ENCODE measurements at regions of chr6 and their contacts with region 1.

Region 1: DNA sequence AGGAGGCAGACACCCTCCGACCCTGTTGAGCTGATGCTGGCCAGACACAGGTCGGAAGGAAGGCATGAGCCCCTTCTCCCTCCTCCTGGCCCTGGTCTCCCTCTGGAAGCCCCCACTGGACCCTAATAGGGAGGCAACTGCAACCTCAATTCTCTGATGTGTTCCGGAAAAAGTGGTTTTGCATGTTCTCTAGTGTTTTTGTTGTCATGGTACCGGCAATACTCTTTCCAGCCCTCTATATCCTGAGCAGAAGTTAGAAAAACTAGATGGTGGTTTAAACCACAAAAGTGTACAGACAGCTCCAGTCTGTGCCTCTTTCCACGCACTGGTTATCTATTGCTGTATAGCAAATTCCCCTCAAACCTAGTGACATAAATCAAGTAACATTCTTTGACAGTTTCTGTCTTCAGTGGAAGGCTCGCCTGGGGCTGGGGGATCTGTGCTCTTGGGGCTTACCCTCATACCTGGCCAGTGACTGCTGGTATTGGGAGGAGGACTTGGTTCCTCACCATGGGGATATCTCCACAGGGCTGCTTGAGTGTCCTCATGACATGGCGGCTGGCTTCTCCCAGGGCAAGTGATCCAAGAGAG is 37.0 kb downstream of the SYTL3 start:
- DNase-seq: no peak
- ATAC-seq: peak; percentile 50
- H3K4me3 ChIP-seq: no peak overlapping the region
- H3K27ac ChIP-seq: peak overlapping the region; percentile 67
- H3K4me1 ChIP-seq: peaks cover 16 to 24% of the 10 kb centered on the region in 2 experiments
- H3K27me3 ChIP-seq: no peaks in the 10 kb centered on the region
- CTCF ChIP-seq: no peak
- POLR2A ChIP-seq: no peak
- RAD21 ChIP-seq: no peak

Region 2: GRCh38 chr6:158213925-158214674 is 472.8 kb before region 1 on chr6:
- CTCF ChIA-PET with region 1: interaction called, 56 read pairs
- POLR2A ChIA-PET with region 1: no interaction called
- RAD21 ChIA-PET with region 1: interaction called, 5 to 9 read pairs
- intact Hi-C with region 1: loop called (anchors 2 kb)
- DNase-seq: peak; percentile 75
- ATAC-seq: peak; percentile 100
- H3K4me3 ChIP-seq: no peak overlapping the region
- H3K27ac ChIP-seq: no peak overlapping the region
- H3K4me1 ChIP-seq: peaks cover 0 to 19% of the 10 kb centered on the region in 2 experiments; a peak in 3 of 4 replicates
- H3K27me3 ChIP-seq: no peaks in the 10 kb centered on the region
- CTCF ChIP-seq: peak; percentile 72 to 81 (median 79)
- POLR2A ChIP-seq: no peak
- RAD21 ChIP-seq: peak; percentile 94

Region 3: DNA sequence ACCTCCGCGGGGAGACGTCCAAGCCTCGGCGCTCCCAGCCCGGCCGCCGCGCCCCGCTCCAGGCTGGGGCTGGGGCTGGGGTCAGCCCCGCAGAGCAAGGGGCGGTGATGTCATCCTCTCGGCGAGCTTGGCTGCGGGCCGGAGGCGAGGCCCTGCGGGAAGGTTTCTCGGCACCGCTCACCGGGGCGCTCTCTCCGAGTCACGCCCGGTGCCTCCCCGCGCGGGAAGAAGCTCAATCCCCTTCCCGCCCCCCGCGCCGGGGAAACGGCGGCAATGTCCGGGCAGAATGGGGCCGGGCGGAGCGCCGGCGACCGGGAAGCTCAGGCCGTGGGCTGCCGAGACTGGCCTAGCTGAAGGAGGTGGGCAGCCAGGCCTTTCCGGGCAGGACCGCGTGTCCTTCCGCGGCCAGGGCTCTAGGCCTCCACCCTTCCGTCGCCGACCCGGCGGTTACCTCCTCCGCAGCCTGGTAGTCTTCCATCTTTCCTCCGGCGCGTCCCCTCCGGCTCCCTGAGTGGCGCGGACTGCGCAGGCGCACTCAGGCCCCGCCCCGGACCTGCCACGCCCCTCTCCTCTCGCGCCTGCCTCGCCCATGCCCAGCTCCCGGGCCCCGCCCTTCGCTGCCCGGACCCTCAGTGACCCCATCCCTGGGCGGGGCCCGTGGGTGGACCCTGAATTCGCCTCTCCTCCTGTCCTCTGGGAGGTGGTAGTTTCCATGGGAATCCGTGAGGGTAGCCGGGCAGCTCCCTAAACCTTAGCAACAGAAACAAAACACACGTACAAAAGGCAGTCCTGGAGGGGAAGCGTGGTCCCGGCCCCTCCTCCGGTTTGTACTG is 42.4 kb before region 1 on chr6 and contains the start of gene DYNLT1:
- CTCF ChIA-PET with region 1: interaction called, 12 read pairs
- POLR2A ChIA-PET with region 1: interaction called, 5 read pairs
- RAD21 ChIA-PET with region 1: interaction called in 1 of 2 experiments, 4 read pairs
- intact Hi-C with region 1: no loop called
- DNase-seq: peak; percentile 91
- ATAC-seq: peak; percentile 83
- H3K4me3 ChIP-seq: peak within 1 kb of the TSS; percentile 89 to 91
- H3K27ac ChIP-seq: peak within 1 kb of the TSS; percentile 97
- H3K4me1 ChIP-seq: peaks cover 60 to 73% of the 10 kb centered on the region in 2 experiments
- H3K27me3 ChIP-seq: no peaks in the 10 kb centered on the region
- CTCF ChIP-seq: no peak
- POLR2A ChIP-seq: peak; percentile 75
- RAD21 ChIP-seq: no peak
- total RNA-seq, gene DYNLT1: 239 TPM

Region 4: DNA sequence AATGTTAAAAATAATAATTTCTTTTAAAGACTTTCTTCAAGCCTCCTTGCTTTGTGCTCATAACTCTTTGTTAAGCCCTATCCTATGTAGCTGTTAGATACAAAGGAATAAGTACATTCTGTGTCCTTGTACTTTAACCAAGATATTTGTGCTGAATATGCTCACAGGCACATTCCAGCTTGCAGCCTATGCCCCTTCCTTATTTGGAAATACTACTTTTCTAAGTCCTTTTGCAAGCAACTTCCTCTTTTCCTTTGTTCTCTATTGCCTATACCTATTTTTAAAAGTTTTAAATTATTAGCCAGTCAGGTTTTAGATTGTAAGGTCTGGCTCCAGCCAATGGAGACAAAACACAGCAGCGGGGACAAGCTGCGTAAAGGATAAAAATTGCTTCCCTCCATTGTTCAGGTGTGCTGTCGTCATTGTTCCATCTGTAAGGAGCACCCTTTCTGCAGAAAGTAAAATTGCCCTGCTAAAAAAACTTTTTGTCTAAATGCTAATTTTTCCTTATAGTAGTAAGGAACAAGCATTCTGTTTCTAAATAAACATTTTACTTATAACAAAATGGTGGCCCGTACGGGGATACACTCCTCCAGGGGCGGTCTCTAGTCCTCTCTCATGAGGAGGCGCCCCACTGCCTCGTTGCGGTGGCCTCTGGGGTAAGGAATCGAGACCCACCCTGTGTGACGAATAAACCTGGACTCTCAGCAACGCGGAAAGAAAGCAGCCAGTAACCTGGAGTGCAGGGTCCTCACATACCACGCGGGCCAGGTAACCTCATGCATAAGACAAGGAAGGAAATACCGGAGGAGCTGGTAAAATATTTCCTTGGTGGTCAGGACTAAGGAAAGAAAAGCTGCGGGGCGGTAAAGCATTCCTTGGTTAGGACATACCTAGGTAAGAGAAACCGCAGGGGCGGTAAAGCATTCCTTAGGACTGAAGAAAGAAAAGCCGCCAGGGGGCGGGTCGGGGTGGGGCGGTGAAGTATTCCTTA is 43.3 kb after region 1 on chr6:
- CTCF ChIA-PET with region 1: interaction called, 3 read pairs
- POLR2A ChIA-PET with region 1: no interaction called
- RAD21 ChIA-PET with region 1: no interaction called
- intact Hi-C with region 1: loop called (anchors 1 kb)
- DNase-seq: peak; percentile 100
- ATAC-seq: peak; percentile 85
- H3K4me3 ChIP-seq: peak overlapping the region; percentile 7 to 12; a peak in 2 of 4 replicates
- H3K27ac ChIP-seq: peak overlapping the region; percentile 97
- H3K4me1 ChIP-seq: peaks cover 44 to 79% of the 10 kb centered on the region in 2 experiments
- H3K27me3 ChIP-seq: no peaks in the 10 kb centered on the region
- CTCF ChIP-seq: no peak
- POLR2A ChIP-seq: peak; percentile 37
- RAD21 ChIP-seq: no peak

Region 5: GRCh38 chr6:158808941-158809678 is 122.2 kb after region 1 on chr6:
- CTCF ChIA-PET with region 1: interaction called, 15 read pairs
- POLR2A ChIA-PET with region 1: interaction called, 17 read pairs
- RAD21 ChIA-PET with region 1: no interaction called
- intact Hi-C with region 1: loop called (anchors 1 kb)
- DNase-seq: no peak
- ATAC-seq: no peak
- H3K4me3 ChIP-seq: peak overlapping the region in 1 of 2 experiments; percentile 1; a peak in 1 of 4 replicates
- H3K27ac ChIP-seq: peak overlapping the region; percentile 92
- H3K4me1 ChIP-seq: peaks cover 95 to 98% of the 10 kb centered on the region in 2 experiments
- H3K27me3 ChIP-seq: no peaks in the 10 kb centered on the region
- CTCF ChIP-seq: no peak
- POLR2A ChIP-seq: no peak
- RAD21 ChIP-seq: no peak